Activated CD8-positive, alpha-beta T cell treated with anti-CD3 and anti-CD28 coated beads for 36 hours (primary cell): ENCODE measurements at regions of chr10 and their contacts with region 1.

Region 1: DNA sequence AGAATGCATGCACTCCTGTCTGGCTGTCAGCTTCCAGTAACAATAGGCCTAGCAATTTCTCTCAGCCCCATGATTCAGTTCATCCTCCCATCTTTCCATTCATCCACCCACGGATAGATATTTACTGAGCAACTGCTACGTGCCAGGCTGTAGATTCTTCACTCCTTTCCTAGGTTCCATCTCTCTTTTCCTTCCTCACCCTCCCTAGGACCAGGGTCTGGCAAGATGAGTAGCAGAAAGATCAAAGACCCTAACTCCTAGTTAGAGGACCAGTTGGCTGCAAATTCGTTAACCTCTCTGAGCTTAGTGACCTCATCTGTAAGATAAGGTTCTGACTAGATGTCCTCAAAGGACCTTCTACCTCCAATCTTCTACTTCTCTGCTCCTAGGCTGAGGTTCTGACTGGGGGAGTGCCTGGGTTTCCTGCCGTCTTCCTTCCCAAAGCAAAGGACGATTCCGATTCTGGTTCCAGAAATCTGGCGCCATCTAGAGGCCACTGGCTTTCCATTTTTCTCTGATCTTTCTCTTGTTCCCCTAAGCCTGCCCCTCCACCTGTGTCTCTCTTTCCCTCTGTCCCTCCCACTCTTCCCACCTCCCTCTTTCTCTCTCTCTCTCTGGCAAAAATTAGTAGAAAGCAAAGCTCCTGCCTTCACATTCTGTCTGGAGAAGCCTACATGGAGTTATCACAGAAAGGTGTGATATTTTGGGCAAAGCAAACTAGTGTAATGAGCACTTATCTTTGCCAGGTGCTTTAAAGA is 26.2 kb downstream of the TBATA start:
- DNase-seq: peak; percentile 82
- ATAC-seq: peak; percentile 67
- H3K4me3 Mint-ChIP-seq: no peak overlapping the region
- H3K27ac Mint-ChIP-seq: peak overlapping the region; percentile 17
- H3K4me1 Mint-ChIP-seq: peaks cover 8% of the 10 kb centered on the region
- H3K27me3 Mint-ChIP-seq: no peaks in the 10 kb centered on the region
- CTCF ChIP-seq: peak; percentile 84

Region 2: DNA sequence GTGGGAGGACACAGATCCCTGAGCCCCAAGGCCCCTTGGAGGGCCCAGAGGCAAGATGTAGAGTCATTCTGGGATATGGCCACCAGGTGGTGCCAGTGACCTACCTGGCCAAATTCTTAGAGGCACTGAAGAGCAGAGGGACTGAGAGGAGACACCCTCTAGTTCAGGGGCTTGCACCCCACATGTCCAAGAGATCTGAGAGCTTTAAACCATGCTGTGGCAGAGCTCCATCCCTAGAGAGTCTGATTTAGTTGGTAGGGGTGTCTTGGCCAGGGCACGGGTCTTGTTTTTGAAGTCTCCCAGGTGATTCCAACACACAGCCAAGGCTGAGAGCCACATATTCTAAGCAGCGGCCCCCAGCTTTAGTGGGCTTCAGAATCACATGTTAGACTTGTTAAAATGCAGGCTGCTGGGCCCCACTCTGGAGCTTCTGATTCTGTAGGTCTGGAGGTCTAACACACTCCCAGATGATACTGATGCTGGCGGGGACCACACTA is 208.9 kb before region 1 on chr10:
- CTCF ChIA-PET with region 1: interaction called, 83 read pairs
- POLR2A ChIA-PET with region 1: no interaction called
- intact Hi-C with region 1: loop called (anchors 2 kb)
- DNase-seq: peak; percentile 87
- ATAC-seq: peak; percentile 96
- H3K4me3 Mint-ChIP-seq: no peak overlapping the region
- H3K27ac Mint-ChIP-seq: no peak overlapping the region
- H3K4me1 Mint-ChIP-seq: no peaks in the 10 kb centered on the region
- H3K27me3 Mint-ChIP-seq: no peaks in the 10 kb centered on the region
- CTCF ChIP-seq: peak; percentile 86

Region 3: GRCh38 chr10:70558871-70559810 is 199.8 kb before region 1 on chr10:
- CTCF ChIA-PET with region 1: interaction called, 29 read pairs
- POLR2A ChIA-PET with region 1: no interaction called
- intact Hi-C with region 1: no loop called
- DNase-seq: peak; percentile 91
- ATAC-seq: peak; percentile 95
- H3K4me3 Mint-ChIP-seq: peak overlapping the region; percentile 74
- H3K27ac Mint-ChIP-seq: peak overlapping the region; percentile 86
- H3K4me1 Mint-ChIP-seq: peaks cover 23% of the 10 kb centered on the region
- H3K27me3 Mint-ChIP-seq: peaks cover 1% of the 10 kb centered on the region
- CTCF ChIP-seq: peak; percentile 70

Region 4: DNA sequence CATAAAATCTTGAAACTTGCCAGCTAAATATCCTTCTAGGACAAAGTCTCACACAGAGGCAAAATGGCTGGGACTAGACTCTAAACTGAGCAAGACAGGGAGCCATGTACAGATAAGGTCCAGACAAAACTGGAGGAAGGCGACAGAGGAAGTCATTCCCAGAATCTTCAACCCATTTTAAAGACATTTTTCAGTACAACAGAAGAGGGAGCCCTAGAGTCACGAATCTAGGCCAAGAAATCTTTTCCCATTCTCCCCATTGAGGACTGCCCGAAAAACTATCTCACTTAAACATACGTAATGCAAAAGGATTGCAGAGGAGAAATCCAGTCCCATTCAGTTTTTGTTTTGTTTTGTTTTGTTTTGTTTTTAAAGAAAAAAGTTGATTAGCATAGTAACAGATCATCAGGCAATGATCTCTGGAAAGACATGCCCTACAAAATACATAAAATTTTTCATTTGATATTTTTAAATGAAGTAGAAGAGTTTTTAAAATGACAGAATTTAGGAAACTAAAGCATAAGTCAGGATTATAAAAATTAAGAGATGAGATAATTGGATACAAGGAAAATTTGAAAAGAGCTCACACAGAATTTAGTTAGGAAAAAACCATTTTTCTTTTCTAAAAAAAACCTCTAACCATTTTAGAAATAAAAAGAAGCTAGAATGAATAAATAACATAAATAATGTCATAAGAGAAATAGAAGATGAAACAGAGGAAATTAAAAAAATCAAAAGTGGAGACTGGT is 139.5 kb before region 1 on chr10:
- CTCF ChIA-PET with region 1: interaction called, 10 read pairs
- POLR2A ChIA-PET with region 1: no interaction called
- intact Hi-C with region 1: loop called (anchors 2 kb)
- DNase-seq: no peak
- ATAC-seq: no peak
- H3K4me3 Mint-ChIP-seq: no peak overlapping the region
- H3K27ac Mint-ChIP-seq: peak overlapping the region; percentile 81
- H3K4me1 Mint-ChIP-seq: peaks cover 47% of the 10 kb centered on the region
- H3K27me3 Mint-ChIP-seq: no peaks in the 10 kb centered on the region
- CTCF ChIP-seq: peak; percentile 82

Region 5: DNA sequence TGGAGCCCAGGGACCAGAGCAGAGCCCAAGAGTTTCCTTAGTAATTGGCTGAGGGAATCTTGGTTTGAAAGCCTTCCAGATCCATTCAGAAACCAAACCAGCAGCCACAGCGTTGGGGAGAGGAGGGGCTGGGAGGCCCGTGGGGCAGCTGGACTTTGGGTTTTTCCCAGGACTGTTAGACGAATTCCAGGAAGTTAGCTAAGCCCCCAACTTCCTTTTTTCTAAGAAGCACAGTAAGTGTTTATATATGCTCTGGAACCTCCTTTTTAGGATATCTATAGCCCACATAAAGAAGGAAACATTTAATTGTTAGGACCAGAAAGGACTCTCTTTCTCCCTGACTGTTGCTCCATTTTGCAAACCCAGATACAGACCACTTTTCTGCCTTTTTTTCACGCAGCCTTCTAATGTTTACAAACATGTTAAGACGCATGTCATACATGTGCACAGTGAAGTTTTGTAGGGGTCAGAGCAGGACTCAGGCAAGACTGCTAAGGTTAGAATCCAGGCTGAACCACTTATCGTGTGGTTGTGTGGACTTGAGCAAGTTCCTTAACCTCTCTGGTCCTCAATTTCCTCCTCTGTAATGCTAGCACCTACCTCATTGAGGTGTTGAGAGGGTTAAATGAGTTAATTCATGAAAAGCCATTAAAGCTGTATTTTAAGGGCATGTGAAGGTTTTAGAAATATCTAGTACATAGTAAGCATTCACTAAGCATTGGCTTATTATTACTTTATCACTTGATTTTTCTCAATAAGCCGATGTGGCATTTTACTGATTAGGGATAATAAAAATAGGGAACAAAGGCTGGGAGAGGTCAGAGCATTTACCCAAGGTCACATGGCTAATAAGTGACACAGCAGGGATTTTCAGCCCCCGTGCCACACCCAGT is 16.2 kb before region 1 on chr10:
- CTCF ChIA-PET with region 1: interaction called, 12 read pairs
- POLR2A ChIA-PET with region 1: no interaction called
- intact Hi-C with region 1: no loop called
- DNase-seq: peak; percentile 42
- ATAC-seq: peak; percentile 62
- H3K4me3 Mint-ChIP-seq: no peak overlapping the region
- H3K27ac Mint-ChIP-seq: peak overlapping the region; percentile 73
- H3K4me1 Mint-ChIP-seq: peaks cover 10% of the 10 kb centered on the region
- H3K27me3 Mint-ChIP-seq: no peaks in the 10 kb centered on the region
- CTCF ChIP-seq: no peak